Aorta (tissue), 5 donors: ENCODE measurements at regions of chr3 and their contacts with region 1.

Region 1: DNA sequence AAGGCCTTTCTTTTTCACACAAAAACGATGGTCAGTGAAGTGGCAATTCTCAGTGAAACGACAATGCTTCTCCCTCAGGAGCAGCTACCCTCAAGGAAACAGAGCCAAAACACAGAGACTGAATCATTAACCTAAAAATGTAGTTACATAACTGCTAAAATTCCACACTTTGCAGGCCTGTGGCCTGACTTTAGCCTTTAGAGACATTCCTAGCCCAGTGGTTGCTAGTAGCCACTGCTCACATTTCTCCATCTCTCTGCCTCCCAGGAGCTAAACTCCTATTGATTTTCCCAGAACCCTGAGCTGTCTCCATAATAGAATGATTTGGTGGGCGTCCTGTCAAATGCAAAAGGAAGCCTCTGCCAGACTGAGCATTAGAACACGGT is 630.1 kb upstream of the KCNMB2 start:
- DNase-seq: no peak
- ATAC-seq: peak; percentile 88
- H3K4me3 ChIP-seq: no peak overlapping the region
- H3K27ac ChIP-seq: peak overlapping the region; percentile 90 to 93
- H3K4me1 ChIP-seq: peaks cover 2 to 16% of the 10 kb centered on the region in 2 donors
- H3K27me3 ChIP-seq: no peaks in the 10 kb centered on the region

Region 2: GRCh38 chr3:177944228-177944661 is 38.1 kb after region 1 on chr3:
- intact Hi-C with region 1: no loop called
- DNase-seq: no peak
- ATAC-seq: no peak
- H3K4me3 ChIP-seq: no peak overlapping the region
- H3K27ac ChIP-seq: no peak overlapping the region
- H3K4me1 ChIP-seq: no peaks in the 10 kb centered on the region
- H3K27me3 ChIP-seq: no peaks in the 10 kb centered on the region

Region 3: DNA sequence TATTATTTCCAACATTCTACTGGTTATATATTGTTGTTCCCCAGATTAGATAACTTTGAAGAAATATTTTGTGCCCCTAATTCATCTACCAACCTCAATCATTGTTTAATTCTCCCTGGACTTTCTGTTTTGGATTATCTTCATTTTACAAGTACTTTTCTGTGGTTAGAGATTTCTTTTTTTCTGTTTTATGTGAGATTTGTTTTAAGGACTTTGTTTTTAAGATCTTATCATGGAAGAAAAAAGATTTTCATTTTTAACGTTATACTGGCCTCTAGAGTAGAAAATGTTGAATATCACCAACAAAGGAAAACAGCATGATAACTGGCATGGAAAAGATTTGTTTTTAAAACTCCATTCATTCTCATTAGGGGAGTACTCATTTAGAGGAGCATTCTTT is 419.2 kb after region 1 on chr3:
- intact Hi-C with region 1: loop called in 1 of 2 experiments (anchors 10 kb)
- DNase-seq: no peak
- ATAC-seq: no peak
- H3K4me3 ChIP-seq: no peak overlapping the region
- H3K27ac ChIP-seq: no peak overlapping the region
- H3K4me1 ChIP-seq: peaks cover 0 to 7% of the 10 kb centered on the region in 2 donors
- H3K27me3 ChIP-seq: no peaks in the 10 kb centered on the region

Region 4: GRCh38 chr3:178546079-178546478 is 640.0 kb after region 1 on chr3:
- intact Hi-C with region 1: no loop called
- DNase-seq: no peak
- ATAC-seq: no peak
- H3K4me3 ChIP-seq: no peak overlapping the region
- H3K27ac ChIP-seq: no peak overlapping the region
- H3K4me1 ChIP-seq: no peaks in the 10 kb centered on the region
- H3K27me3 ChIP-seq: no peaks in the 10 kb centered on the region